Activated CD8-positive, alpha-beta T cell treated with anti-CD3 and anti-CD28 coated beads for 36 hours (primary cell): ENCODE measurements at regions of chr6 and their contacts with region 1.

Region 1: DNA sequence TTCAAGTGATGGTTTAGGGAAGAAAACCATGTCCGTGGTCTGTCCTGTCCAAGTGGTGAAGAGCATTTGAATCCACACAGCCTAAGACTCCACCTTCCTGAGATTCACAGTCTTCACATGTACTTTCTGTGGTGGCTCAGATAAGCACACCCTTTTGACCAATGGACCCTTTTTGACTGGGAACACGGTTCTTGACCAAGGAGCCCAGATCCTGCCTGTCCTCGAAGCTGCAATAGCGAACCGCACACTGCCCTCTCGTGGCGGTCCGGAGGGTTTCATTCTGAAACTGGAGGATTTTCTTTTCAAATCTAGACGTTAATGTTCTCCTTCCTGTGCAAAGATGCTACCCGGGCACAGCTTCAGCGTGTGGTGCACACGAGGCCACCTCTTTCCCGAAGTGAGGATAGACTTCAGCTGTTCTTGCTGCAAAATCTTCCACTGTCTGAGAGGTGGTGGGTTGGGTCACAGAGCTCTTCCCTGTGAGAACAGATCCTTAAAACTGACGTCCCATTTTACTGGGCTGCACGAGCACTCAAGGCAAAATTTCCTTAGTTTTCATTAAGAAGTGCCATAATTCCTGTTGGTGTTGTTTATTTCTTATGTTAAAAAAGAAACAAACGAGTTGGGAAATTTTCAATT is 90.5 kb downstream of the SYNJ2 start:
- DNase-seq: peak; percentile 77
- ATAC-seq: peak; percentile 80
- H3K4me3 Mint-ChIP-seq: no peak overlapping the region
- H3K27ac Mint-ChIP-seq: no peak overlapping the region
- H3K4me1 Mint-ChIP-seq: peaks cover 19% of the 10 kb centered on the region
- H3K27me3 Mint-ChIP-seq: no peaks in the 10 kb centered on the region
- CTCF ChIP-seq: peak; percentile 92

Region 2: DNA sequence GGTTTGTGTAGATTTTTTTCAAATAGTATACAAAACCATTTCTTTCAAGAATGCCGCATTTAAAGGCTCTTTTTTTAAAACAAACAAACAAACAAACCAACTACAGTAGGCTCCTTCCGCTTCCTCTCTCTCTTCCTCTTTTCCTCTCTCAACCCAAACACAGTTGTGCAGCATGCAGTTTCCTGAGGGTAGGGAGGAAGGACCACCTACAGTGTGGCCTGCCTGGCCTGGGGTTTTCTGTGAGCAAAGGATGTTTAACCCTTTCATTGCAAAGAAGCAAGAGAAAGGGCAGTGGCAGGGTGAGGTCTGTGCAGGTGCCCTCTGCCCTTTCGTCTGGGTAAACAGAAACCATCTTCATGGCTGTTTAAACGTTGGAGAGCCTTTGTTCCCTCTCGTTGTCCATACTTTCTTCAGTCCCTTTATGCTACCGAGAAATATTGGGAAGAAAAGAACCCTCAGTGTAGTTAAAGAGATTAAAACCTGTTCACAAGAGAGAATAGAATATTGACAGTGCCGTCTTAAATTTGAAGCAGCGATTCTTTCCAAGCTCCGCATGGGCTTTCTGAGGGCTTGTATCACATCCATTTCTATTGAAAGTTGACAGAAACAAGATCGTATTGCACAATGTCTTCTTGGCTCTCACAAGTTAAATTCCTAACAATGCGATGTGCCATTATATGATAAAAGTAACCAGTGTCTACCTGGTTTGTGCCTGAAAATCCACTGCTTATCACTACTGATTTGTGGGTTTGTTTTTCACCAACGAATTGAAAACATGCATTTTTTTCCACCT is 464.7 kb before region 1 on chr6:
- CTCF ChIA-PET with region 1: no interaction called
- POLR2A ChIA-PET with region 1: no interaction called
- intact Hi-C with region 1: no loop called
- DNase-seq: no peak
- ATAC-seq: no peak
- H3K4me3 Mint-ChIP-seq: no peak overlapping the region
- H3K27ac Mint-ChIP-seq: no peak overlapping the region
- H3K4me1 Mint-ChIP-seq: no peaks in the 10 kb centered on the region
- H3K27me3 Mint-ChIP-seq: no peaks in the 10 kb centered on the region
- CTCF ChIP-seq: no peak

Region 3: GRCh38 chr6:157941101-157941863 is 130.9 kb before region 1 on chr6:
- CTCF ChIA-PET with region 1: interaction called, 10 read pairs
- POLR2A ChIA-PET with region 1: interaction called, 3 read pairs
- intact Hi-C with region 1: no loop called
- DNase-seq: no peak
- ATAC-seq: no peak
- H3K4me3 Mint-ChIP-seq: no peak overlapping the region
- H3K27ac Mint-ChIP-seq: peak overlapping the region; percentile 38
- H3K4me1 Mint-ChIP-seq: peaks cover 37% of the 10 kb centered on the region
- H3K27me3 Mint-ChIP-seq: no peaks in the 10 kb centered on the region
- CTCF ChIP-seq: no peak

Region 4: GRCh38 chr6:157981395-157982296 is 90.6 kb before region 1 on chr6 and contains the start of gene SYNJ2:
- CTCF ChIA-PET with region 1: interaction called, 10 read pairs
- POLR2A ChIA-PET with region 1: no interaction called
- intact Hi-C with region 1: loop called (anchors 5 kb)
- DNase-seq: peak; percentile 82
- ATAC-seq: peak; percentile 87
- H3K4me3 Mint-ChIP-seq: peak within 1 kb of the TSS; percentile 91
- H3K27ac Mint-ChIP-seq: peak within 1 kb of the TSS; percentile 85
- H3K4me1 Mint-ChIP-seq: peaks cover 42% of the 10 kb centered on the region
- H3K27me3 Mint-ChIP-seq: no peaks in the 10 kb centered on the region
- CTCF ChIP-seq: peak; percentile 73
- total RNA-seq, gene SYNJ2: 27.7 to 28.5 TPM

Region 5: GRCh38 chr6:158026054-158026900 is 45.9 kb before region 1 on chr6:
- CTCF ChIA-PET with region 1: interaction called, 33 read pairs
- POLR2A ChIA-PET with region 1: interaction called, 4 read pairs
- intact Hi-C with region 1: no loop called
- DNase-seq: peak; percentile 93
- ATAC-seq: peak; percentile 80
- H3K4me3 Mint-ChIP-seq: peak overlapping the region; percentile 74
- H3K27ac Mint-ChIP-seq: peak overlapping the region; percentile 100
- H3K4me1 Mint-ChIP-seq: peaks cover 34% of the 10 kb centered on the region
- H3K27me3 Mint-ChIP-seq: no peaks in the 10 kb centered on the region
- CTCF ChIP-seq: peak; percentile 92

Region 6: DNA sequence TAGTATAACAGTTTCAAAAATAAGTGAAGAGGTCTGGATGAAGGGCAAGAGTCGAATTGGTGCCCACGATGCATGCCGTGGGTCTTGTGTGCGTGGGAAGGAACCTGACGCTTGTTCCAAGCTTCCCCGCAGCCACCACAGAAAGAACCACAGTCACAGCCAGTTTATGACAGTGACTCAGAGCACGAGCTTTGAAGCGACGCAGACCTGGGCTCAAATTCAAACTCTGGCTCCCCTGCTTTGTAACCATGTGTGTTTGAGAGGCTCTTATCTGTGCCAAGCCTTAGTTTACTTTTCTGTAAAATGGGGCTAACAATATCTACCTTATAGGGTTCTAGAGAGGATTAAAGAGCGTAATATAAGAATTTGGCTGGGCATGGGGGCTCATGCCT is 25.1 kb before region 1 on chr6:
- CTCF ChIA-PET with region 1: interaction called, 13 read pairs
- POLR2A ChIA-PET with region 1: no interaction called
- intact Hi-C with region 1: no loop called
- DNase-seq: peak; percentile 88
- ATAC-seq: peak; percentile 60
- H3K4me3 Mint-ChIP-seq: peak overlapping the region; percentile 9
- H3K27ac Mint-ChIP-seq: peak overlapping the region; percentile 72
- H3K4me1 Mint-ChIP-seq: peaks cover 26% of the 10 kb centered on the region
- H3K27me3 Mint-ChIP-seq: no peaks in the 10 kb centered on the region
- CTCF ChIP-seq: no peak

Region 7: GRCh38 chr6:158060455-158061360 is 11.5 kb before region 1 on chr6:
- CTCF ChIA-PET with region 1: interaction called, 33 read pairs
- POLR2A ChIA-PET with region 1: interaction called, 4 read pairs
- intact Hi-C with region 1: no loop called
- DNase-seq: no peak
- ATAC-seq: no peak
- H3K4me3 Mint-ChIP-seq: no peak overlapping the region
- H3K27ac Mint-ChIP-seq: no peak overlapping the region
- H3K4me1 Mint-ChIP-seq: peaks cover 26% of the 10 kb centered on the region
- H3K27me3 Mint-ChIP-seq: no peaks in the 10 kb centered on the region
- CTCF ChIP-seq: no peak

Region 8: DNA sequence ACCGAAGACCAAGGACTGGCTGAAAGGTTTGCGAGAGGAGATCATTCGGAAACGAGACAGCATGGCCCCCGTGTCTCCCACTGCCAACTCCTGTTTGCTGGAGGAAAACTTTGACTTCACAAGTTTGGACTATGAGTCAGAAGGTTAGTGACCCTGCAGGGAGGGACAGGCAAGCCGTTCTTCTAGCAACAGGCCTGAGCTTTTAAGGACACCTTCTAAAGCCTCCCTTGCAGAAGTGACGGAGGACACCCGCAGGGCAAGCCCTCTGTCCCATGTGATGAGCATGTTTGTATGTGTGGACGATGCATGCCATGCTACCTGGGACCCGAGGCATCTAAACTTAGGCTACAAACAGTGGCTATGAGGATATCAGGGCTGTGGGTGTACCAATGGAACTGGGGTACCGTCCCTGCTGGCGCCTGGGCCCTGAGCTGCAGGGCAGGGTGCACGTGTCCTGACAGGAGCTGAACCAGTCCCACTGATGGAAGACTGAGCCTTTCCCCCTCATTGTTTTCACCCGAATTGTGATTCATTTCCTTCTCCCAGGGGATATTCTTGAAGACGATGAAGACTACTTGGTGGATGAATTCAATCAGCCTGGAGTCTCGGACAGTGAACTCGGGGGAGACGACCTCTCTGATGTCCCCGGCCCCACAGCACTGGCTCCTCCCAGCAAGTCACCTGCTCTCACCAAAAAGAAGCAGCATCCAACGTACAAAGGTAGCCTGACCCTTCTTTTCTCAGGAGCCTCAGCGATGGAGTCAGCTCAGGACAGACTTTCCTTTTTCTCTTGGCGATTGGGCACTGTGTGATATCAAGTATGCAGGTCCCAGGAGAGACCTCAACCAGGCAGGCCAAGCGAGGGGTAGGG is 11.5 kb after region 1 on chr6:
- CTCF ChIA-PET with region 1: interaction called, 11 read pairs
- POLR2A ChIA-PET with region 1: no interaction called
- intact Hi-C with region 1: no loop called
- DNase-seq: no peak
- ATAC-seq: no peak
- H3K4me3 Mint-ChIP-seq: no peak overlapping the region
- H3K27ac Mint-ChIP-seq: no peak overlapping the region
- H3K4me1 Mint-ChIP-seq: no peaks in the 10 kb centered on the region
- H3K27me3 Mint-ChIP-seq: no peaks in the 10 kb centered on the region
- CTCF ChIP-seq: no peak

Region 9: DNA sequence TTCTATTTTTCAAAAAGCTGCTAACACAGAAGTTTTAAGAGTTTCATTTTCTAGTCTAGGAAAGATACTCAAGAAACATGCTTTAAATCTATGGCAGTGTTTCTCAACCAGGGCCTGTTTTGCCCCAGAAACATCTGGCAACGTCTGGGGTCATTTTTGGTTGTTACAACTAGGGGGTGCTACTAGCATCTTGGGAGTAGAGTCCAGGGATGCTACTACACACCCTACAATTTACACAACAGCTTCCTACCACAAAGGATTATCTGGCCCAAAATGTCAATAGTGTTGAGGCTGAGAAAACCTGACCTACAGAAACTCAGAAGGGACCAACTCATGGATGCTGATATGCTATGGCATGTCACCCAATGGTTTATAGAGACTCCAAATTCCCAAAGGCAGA is 71.5 kb after region 1 on chr6:
- CTCF ChIA-PET with region 1: no interaction called
- POLR2A ChIA-PET with region 1: no interaction called
- intact Hi-C with region 1: no loop called
- DNase-seq: no peak
- ATAC-seq: peak; percentile 39
- H3K4me3 Mint-ChIP-seq: no peak overlapping the region
- H3K27ac Mint-ChIP-seq: no peak overlapping the region
- H3K4me1 Mint-ChIP-seq: no peaks in the 10 kb centered on the region
- H3K27me3 Mint-ChIP-seq: no peaks in the 10 kb centered on the region
- CTCF ChIP-seq: peak; percentile 58